Caco-2 (cell line): ENCODE measurements at regions of chr11 and their contacts with region 1.

Region 1: DNA sequence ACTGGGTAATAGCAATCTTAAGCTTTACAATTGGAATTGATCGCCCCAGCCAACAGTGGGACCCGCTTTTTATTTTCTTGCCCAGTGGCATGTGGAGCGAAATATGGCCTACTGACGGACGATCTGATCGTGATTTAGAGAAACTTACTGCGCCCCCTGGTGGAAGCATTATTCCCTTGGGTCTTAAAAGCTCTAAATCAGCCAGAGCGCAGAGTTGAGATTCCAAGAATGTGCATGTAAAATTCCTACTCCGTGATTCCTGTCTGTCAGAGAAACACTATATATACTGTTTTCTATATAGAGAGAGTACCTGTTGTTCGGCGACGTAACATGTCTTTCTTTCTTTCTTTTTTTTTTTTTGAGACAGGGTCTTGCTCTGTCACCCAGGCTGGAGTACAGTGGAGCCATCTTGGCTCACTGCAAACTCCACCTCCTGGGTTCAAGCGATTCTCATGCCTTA is 3.7 kb upstream of the DPF2 start:
- DNase-seq: peak; percentile 87 to 89
- H3K4me3 ChIP-seq: no peak overlapping the region
- H3K4me3 Mint-ChIP-seq: no peak overlapping the region
- H3K27ac Mint-ChIP-seq: peak overlapping the region; percentile 3
- H3K4me1 ChIP-seq: peaks cover 9% of the 10 kb centered on the region; the same call in 1 of the 2 replicates
- H3K4me1 Mint-ChIP-seq: peaks cover 8% of the 10 kb centered on the region
- H3K27me3 ChIP-seq: no peaks in the 10 kb centered on the region
- H3K27me3 Mint-ChIP-seq: no peaks in the 10 kb centered on the region
- CTCF ChIP-seq: peak; percentile 78 to 86

Region 2: GRCh38 chr11:65261591-65262380 is 68.2 kb before region 1 on chr11 and contains the start of gene POLA2:
- CTCF ChIA-PET with region 1: interaction called, 11 read pairs
- POLR2A ChIA-PET with region 1: interaction called, 9 read pairs
- intact Hi-C with region 1: no loop called
- DNase-seq: peak; percentile 96
- H3K4me3 ChIP-seq: peak within 1 kb of the TSS; percentile 71
- H3K4me3 Mint-ChIP-seq: peak within 1 kb of the TSS; percentile 81
- H3K27ac Mint-ChIP-seq: peak within 1 kb of the TSS; percentile 70
- H3K4me1 ChIP-seq: no peaks in the 10 kb centered on the region
- H3K4me1 Mint-ChIP-seq: peaks cover 22% of the 10 kb centered on the region
- H3K27me3 ChIP-seq: no peaks in the 10 kb centered on the region
- H3K27me3 Mint-ChIP-seq: no peaks in the 10 kb centered on the region
- CTCF ChIP-seq: no peak
- total RNA-seq, gene POLA2: 23.2 and 25.3 TPM in 2 replicates

Region 3: GRCh38 chr11:65354265-65355012 is 24.5 kb after region 1 on chr11 and contains the start of gene TIGD3:
- CTCF ChIA-PET with region 1: interaction called, 7 read pairs
- POLR2A ChIA-PET with region 1: interaction called, 6 read pairs
- intact Hi-C with region 1: loop called (anchors 1 kb)
- DNase-seq: peak; percentile 98 to 99
- H3K4me3 ChIP-seq: peak within 1 kb of the TSS; percentile 62
- H3K4me3 Mint-ChIP-seq: peak within 1 kb of the TSS; percentile 94
- H3K27ac Mint-ChIP-seq: peak within 1 kb of the TSS; percentile 87
- H3K4me1 ChIP-seq: peaks cover 28% of the 10 kb centered on the region
- H3K4me1 Mint-ChIP-seq: peaks cover 38% of the 10 kb centered on the region
- H3K27me3 ChIP-seq: no peaks in the 10 kb centered on the region
- H3K27me3 Mint-ChIP-seq: no peaks in the 10 kb centered on the region
- CTCF ChIP-seq: no peak
- total RNA-seq, gene TIGD3: 3.0 and 3.2 TPM in 2 replicates

Region 4: GRCh38 chr11:65401073-65401802 is 71.3 kb after region 1 on chr11:
- CTCF ChIA-PET with region 1: no interaction called
- POLR2A ChIA-PET with region 1: interaction called, 12 read pairs
- intact Hi-C with region 1: no loop called
- DNase-seq: no peak
- H3K4me3 ChIP-seq: no peak overlapping the region
- H3K4me3 Mint-ChIP-seq: no peak overlapping the region
- H3K27ac Mint-ChIP-seq: no peak overlapping the region
- H3K4me1 ChIP-seq: 0 out of 2 replicates have a peak, but pooled peaks cover 3% of the 10 kb centered on the region
- H3K4me1 Mint-ChIP-seq: peaks cover 4% of the 10 kb centered on the region
- H3K27me3 ChIP-seq: no peaks in the 10 kb centered on the region
- H3K27me3 Mint-ChIP-seq: no peaks in the 10 kb centered on the region
- CTCF ChIP-seq: no peak

Region 5: DNA sequence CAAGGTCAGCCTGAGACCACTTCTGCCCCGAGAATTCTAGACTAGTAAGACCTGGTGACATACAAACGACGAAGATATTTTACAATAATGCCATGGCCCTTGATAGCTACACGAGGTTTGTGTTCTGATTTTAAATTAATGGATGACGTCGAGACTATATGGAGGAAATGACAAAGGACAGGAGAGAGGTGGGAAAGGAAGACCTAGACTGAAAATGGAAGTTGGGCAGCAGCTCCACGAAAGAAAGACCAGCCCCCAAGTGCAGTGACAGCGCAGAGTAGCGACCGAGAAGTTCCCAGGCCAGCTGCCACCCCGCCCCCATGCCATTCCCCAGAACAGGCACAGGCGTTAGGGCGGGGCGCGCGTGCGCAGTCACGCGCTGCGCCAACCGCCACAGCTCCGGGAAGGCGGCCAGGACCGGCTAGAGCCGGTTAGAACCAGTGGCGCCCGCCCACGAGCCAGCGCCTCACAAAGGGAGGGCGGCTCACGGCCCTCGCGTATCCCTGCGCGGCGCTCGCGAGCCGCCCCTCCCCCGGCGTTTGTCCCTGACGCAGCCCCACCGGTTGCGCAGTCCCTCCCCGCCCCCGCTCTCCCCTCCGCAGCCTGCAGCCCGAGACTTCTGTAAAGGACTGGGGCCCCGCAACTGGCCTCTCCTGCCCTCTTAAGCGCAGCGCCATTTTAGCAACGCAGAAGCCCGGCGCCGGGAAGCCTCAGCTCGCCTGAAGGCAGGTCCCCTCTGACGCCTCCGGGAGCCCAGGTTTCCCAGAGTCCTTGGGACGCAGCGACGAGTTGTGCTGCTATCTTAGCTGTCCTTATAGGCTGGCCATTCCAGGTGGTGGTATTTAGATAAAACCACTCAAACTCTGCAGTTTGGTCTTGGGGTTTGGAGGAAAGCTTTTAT is 167.4 kb after region 1 on chr11:
- CTCF ChIA-PET with region 1: no interaction called
- POLR2A ChIA-PET with region 1: interaction called, 11 read pairs
- intact Hi-C with region 1: no loop called
- DNase-seq: peak; percentile 99
- H3K4me3 ChIP-seq: peak overlapping the region; percentile 81
- H3K4me3 Mint-ChIP-seq: no peak overlapping the region
- H3K27ac Mint-ChIP-seq: no peak overlapping the region
- H3K4me1 ChIP-seq: peaks cover 37% of the 10 kb centered on the region
- H3K4me1 Mint-ChIP-seq: peaks cover 35% of the 10 kb centered on the region
- H3K27me3 ChIP-seq: no peaks in the 10 kb centered on the region
- H3K27me3 Mint-ChIP-seq: peaks cover 3% of the 10 kb centered on the region
- CTCF ChIP-seq: peak in 1 of 2 experiments; percentile 17